IMR-90 (cell line): ENCODE measurements at regions of chr1 and their contacts with region 1.

Region 1: DNA sequence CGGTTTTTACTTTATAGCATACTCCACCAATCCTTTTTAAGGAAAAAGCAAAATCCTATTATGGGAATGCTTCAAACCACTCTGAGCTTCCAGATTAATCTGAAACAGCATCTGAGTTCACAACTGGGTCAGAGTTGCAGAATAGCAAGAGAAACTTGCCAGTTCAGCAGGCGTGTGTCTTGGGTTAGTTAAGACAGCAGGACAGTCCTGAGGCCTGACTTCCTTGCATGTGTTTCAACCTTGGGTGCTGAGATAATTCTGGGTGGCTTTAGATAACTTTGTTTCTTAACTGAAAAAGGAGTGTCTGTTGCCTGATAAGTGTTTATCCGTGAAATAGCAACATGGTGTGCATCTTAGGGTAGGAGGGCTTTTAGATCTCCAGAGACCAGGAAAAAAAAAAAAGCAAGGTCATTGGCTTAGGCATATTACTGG is 169.2 kb downstream of the DHRS3 start:
- DNase-seq: peak; percentile 44
- ATAC-seq: peak; percentile 45
- H3K4me3 ChIP-seq: no peak overlapping the region
- H3K27ac ChIP-seq: peak overlapping the region; percentile 87; the same call in 1 of the 2 replicates
- H3K4me1 ChIP-seq: peaks cover 22% of the 10 kb centered on the region
- H3K27me3 ChIP-seq: no peaks in the 10 kb centered on the region
- CTCF ChIP-seq: no peak
- POLR2A ChIP-seq: no peak
- RAD21 ChIP-seq: no peak

Region 2: DNA sequence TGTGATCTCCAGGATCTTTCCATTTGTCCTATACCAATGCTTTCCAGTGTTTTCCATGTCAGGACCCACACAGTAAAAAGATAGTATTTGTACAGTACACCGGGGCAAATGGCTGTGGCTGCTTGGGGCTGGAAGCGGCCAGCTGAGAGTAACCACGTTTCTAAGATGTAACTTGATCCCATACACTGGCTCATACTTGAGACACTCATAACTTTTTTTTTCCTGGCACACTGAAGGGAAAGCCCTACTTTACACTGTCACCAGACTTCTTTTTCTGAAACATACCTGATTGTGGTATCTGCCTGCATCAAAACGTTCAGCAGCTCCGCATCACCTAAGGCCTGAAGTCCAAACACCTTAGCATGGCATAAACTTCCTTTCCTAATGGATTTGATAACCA is 197.3 kb before region 1 on chr1:
- CTCF ChIA-PET with region 1: interaction called, 10 read pairs
- POLR2A ChIA-PET with region 1: no interaction called
- dilution Hi-C with region 1: no loop called
- in situ Hi-C with region 1: no loop called
- intact Hi-C with region 1: no loop called
- DNase-seq: peak; percentile 82
- ATAC-seq: peak; percentile 90
- H3K4me3 ChIP-seq: no peak overlapping the region
- H3K27ac ChIP-seq: no peak overlapping the region
- H3K4me1 ChIP-seq: 0 out of 2 replicates have a peak, but pooled peaks cover 3% of the 10 kb centered on the region
- H3K27me3 ChIP-seq: no peaks in the 10 kb centered on the region
- CTCF ChIP-seq: no peak
- POLR2A ChIP-seq: no peak
- RAD21 ChIP-seq: no peak

Region 3: GRCh38 chr1:12344596-12345349 is 104.0 kb before region 1 on chr1:
- CTCF ChIA-PET with region 1: no interaction called
- POLR2A ChIA-PET with region 1: no interaction called
- dilution Hi-C with region 1: no loop called
- in situ Hi-C with region 1: no loop called
- intact Hi-C with region 1: no loop called
- DNase-seq: no peak
- ATAC-seq: no peak
- H3K4me3 ChIP-seq: no peak overlapping the region
- H3K27ac ChIP-seq: no peak overlapping the region
- H3K4me1 ChIP-seq: no peaks in the 10 kb centered on the region
- H3K27me3 ChIP-seq: no peaks in the 10 kb centered on the region
- CTCF ChIP-seq: no peak
- POLR2A ChIP-seq: no peak
- RAD21 ChIP-seq: no peak